IMR-90 (cell line): ENCODE measurements at regions of chr9 and their contacts with region 1.

Region 1: DNA sequence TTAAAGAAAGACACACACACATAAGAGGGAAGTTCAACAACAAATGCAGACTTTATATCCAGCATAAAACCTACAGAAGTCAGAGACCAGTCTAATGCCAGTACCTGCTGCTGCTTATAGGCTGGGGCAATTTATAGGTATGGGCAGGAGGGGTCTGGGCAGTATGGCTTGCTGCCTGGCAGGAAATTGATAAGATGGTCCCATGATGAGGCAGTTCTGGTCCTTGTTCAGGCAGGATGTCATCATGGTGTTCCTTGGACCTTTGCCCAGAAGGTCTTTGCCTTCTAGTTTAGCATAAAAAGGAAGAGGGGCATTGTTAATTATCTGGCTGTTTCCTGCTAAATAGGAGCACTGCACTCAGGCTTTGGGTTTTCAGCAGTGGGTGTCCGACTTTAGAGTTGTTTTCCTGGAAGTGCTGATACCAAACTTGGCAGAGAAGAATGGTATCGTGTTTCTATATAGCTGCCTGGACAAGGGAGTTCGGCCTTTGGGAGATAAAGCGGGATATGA is 10.4 kb upstream of the PDCD1LG2 start:
- DNase-seq: peak; percentile 68
- ATAC-seq: 0 out of 2 replicates have a peak, but pooled peaks have one; percentile 24
- H3K4me3 ChIP-seq: no peak overlapping the region
- H3K27ac ChIP-seq: no peak overlapping the region
- H3K4me1 ChIP-seq: peaks cover 6% of the 10 kb centered on the region; the same call in 1 of the 2 replicates
- H3K27me3 ChIP-seq: no peaks in the 10 kb centered on the region
- CTCF ChIP-seq: no peak
- POLR2A ChIP-seq: no peak
- RAD21 ChIP-seq: no peak

Region 2: GRCh38 chr9:5566054-5566618 is 66.2 kb after region 1 on chr9:
- CTCF ChIA-PET with region 1: no interaction called
- POLR2A ChIA-PET with region 1: no interaction called
- dilution Hi-C with region 1: no loop called
- in situ Hi-C with region 1: loop called (anchors 10 kb)
- intact Hi-C with region 1: no loop called
- DNase-seq: no peak
- ATAC-seq: no peak
- H3K4me3 ChIP-seq: no peak overlapping the region
- H3K27ac ChIP-seq: no peak overlapping the region
- H3K4me1 ChIP-seq: peaks cover 3% of the 10 kb centered on the region; the same call in 1 of the 2 replicates
- H3K27me3 ChIP-seq: no peaks in the 10 kb centered on the region
- CTCF ChIP-seq: no peak
- POLR2A ChIP-seq: no peak
- RAD21 ChIP-seq: no peak